ENCODE measurements at regions of chr14 and their contacts with region 1.

Region 1: DNA sequence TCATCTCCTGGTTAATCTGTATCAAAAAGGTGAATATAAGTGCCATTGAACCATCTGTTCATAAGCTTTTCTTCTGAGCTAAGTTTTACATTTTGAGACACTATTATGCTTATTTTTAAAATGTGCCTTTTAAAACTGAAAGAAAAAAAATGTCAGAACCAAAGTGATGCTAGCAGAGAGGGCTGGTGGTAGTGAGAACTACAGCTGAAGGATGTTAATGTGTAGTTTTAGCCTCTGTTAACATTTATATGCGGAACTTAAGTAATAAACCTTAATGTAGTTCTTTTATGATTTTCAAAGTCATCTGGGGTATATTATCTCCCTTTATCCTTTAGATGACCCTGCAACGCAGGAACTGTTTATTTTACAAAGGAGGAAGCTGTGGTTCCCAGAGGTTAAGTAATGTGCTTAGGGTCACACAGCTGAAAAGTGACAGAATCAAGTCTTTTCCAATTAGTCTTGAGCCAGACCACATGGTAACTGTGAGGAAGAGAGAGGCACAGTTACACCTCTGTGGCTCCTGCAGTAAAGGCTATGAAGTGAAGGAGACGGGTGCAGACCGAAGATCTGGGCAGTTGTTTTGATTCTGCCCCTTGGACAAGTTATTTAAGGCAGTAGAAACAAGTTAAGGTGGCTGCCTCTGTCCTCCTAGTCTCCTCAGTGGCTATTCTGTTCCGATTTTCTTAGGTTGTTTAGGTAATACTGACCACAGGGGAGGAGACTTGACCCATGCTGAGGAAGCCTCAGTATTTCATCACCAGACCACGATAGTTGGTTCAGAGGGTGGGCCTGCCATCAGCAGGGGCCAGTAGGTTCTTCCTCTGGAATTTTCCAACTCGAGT is 23.9 kb downstream of the GNG2 start:
- DNase-seq: no peak
- ATAC-seq: peak; percentile 84
- H3K4me3 ChIP-seq: peak overlapping the region; percentile 4; the same call in 1 of the 2 replicates
- H3K27ac ChIP-seq: peak overlapping the region; percentile 34
- H3K4me1 ChIP-seq: peaks cover 38% of the 10 kb centered on the region
- H3K27me3 ChIP-seq: no peaks in the 10 kb centered on the region
- CTCF ChIP-seq: no peak
- EP300 ChIP-seq: peak in 1 of 2 experiments; percentile 56; a peak in 1 of 4 replicates
- POLR2A ChIP-seq: no peak
- RAD21 ChIP-seq: no peak

Region 2: GRCh38 chr14:51490205-51490604 is 394.1 kb before region 1 on chr14:
- CTCF ChIA-PET with region 1: no interaction called
- POLR2A ChIA-PET with region 1: no interaction called
- RAD21 ChIA-PET with region 1: no interaction called
- SMC1A ChIA-PET with region 1: no interaction called
- in situ Hi-C with region 1: no loop called
- intact Hi-C with region 1: no loop called
- DNase-seq: no peak
- ATAC-seq: no peak
- H3K4me3 ChIP-seq: no peak overlapping the region
- H3K27ac ChIP-seq: no peak overlapping the region
- H3K4me1 ChIP-seq: no peaks in the 10 kb centered on the region
- H3K27me3 ChIP-seq: no peaks in the 10 kb centered on the region; a peak in 1 of 4 replicates
- CTCF ChIP-seq: no peak
- EP300 ChIP-seq: no peak
- POLR2A ChIP-seq: no peak
- RAD21 ChIP-seq: no peak

Region 3: GRCh38 chr14:51651388-51652167 is 232.7 kb before region 1 on chr14 and contains the start of gene FRMD6:
- CTCF ChIA-PET with region 1: no interaction called
- POLR2A ChIA-PET with region 1: no interaction called
- RAD21 ChIA-PET with region 1: no interaction called
- SMC1A ChIA-PET with region 1: no interaction called
- in situ Hi-C with region 1: no loop called
- intact Hi-C with region 1: no loop called
- DNase-seq: peak; percentile 26
- ATAC-seq: peak; percentile 90
- H3K4me3 ChIP-seq: peak within 1 kb of the TSS; percentile 84
- H3K27ac ChIP-seq: peak within 1 kb of the TSS; percentile 41
- H3K4me1 ChIP-seq: no peaks in the 10 kb centered on the region
- H3K27me3 ChIP-seq: peaks cover 3 to 9% of the 10 kb centered on the region in 2 experiments; a peak in 3 of 4 replicates
- CTCF ChIP-seq: peak; percentile 54 to 80 (median 68)
- EP300 ChIP-seq: no peak
- POLR2A ChIP-seq: peak; percentile 82; the same call in 1 of the 2 replicates
- RAD21 ChIP-seq: peak; percentile 59
- polyA plus RNA-seq, gene FRMD6: 1.1 to 1.6 TPM

Region 4: DNA sequence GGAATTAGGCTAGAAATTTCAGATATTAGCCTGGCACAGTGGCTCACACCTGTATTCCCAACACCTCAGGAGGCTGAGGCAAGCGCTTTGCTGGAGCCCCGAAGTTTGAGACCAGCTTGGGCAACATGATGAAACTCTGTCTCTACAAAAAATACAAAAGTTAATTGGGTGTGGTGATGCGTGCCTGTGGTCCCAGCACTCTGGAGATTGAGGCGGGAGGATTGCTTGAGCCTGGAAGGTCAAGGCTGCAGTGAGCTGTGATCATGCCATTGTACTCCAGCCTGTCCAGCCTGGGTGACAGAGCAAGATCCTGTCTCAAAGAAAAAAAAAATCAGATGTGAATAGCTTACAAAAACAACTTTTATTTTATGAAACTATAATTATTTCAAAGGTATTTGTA is 217.5 kb before region 1 on chr14:
- CTCF ChIA-PET with region 1: no interaction called
- POLR2A ChIA-PET with region 1: no interaction called
- RAD21 ChIA-PET with region 1: no interaction called
- SMC1A ChIA-PET with region 1: no interaction called
- in situ Hi-C with region 1: no loop called
- intact Hi-C with region 1: no loop called
- DNase-seq: no peak
- ATAC-seq: no peak
- H3K4me3 ChIP-seq: no peak overlapping the region
- H3K27ac ChIP-seq: no peak overlapping the region
- H3K4me1 ChIP-seq: no peaks in the 10 kb centered on the region
- H3K27me3 ChIP-seq: no peaks in the 10 kb centered on the region; a peak in 1 of 4 replicates
- CTCF ChIP-seq: no peak
- EP300 ChIP-seq: no peak
- POLR2A ChIP-seq: no peak
- RAD21 ChIP-seq: no peak

Region 5: GRCh38 chr14:51828017-51828797 is 56.1 kb before region 1 on chr14:
- CTCF ChIA-PET with region 1: interaction called, 5 read pairs
- POLR2A ChIA-PET with region 1: no interaction called
- RAD21 ChIA-PET with region 1: interaction called, 4 read pairs
- SMC1A ChIA-PET with region 1: interaction called, 11 read pairs
- in situ Hi-C with region 1: no loop called
- intact Hi-C with region 1: no loop called
- DNase-seq: peak; percentile 74
- ATAC-seq: peak; percentile 99
- H3K4me3 ChIP-seq: no peak overlapping the region
- H3K27ac ChIP-seq: no peak overlapping the region
- H3K4me1 ChIP-seq: no peaks in the 10 kb centered on the region
- H3K27me3 ChIP-seq: no peaks in the 10 kb centered on the region
- CTCF ChIP-seq: peak in 1 of 3 experiments; percentile 26; a peak in 2 of 6 replicates
- EP300 ChIP-seq: peak in 1 of 2 experiments; percentile 17; a peak in 1 of 4 replicates
- POLR2A ChIP-seq: no peak
- RAD21 ChIP-seq: 0 out of 2 replicates have a peak, but pooled peaks have one; percentile 3

Region 6: GRCh38 chr14:51860164-51860824 is 24.0 kb before region 1 on chr14 and contains the start of gene GNG2:
- CTCF ChIA-PET with region 1: interaction called, 9 read pairs
- POLR2A ChIA-PET with region 1: interaction called, 37 read pairs
- RAD21 ChIA-PET with region 1: interaction called, 197 read pairs
- SMC1A ChIA-PET with region 1: interaction called, 254 read pairs
- in situ Hi-C with region 1: no loop called
- intact Hi-C with region 1: no loop called
- DNase-seq: peak; percentile 71
- ATAC-seq: peak; percentile 88
- H3K4me3 ChIP-seq: peak within 1 kb of the TSS; percentile 90
- H3K27ac ChIP-seq: peak within 1 kb of the TSS; percentile 82
- H3K4me1 ChIP-seq: peaks cover 12% of the 10 kb centered on the region
- H3K27me3 ChIP-seq: no peaks in the 10 kb centered on the region
- CTCF ChIP-seq: no peak
- EP300 ChIP-seq: no peak
- POLR2A ChIP-seq: peak; percentile 94
- RAD21 ChIP-seq: no peak
- polyA plus RNA-seq, gene GNG2: 31.6 to 42.0 TPM

Region 7: DNA sequence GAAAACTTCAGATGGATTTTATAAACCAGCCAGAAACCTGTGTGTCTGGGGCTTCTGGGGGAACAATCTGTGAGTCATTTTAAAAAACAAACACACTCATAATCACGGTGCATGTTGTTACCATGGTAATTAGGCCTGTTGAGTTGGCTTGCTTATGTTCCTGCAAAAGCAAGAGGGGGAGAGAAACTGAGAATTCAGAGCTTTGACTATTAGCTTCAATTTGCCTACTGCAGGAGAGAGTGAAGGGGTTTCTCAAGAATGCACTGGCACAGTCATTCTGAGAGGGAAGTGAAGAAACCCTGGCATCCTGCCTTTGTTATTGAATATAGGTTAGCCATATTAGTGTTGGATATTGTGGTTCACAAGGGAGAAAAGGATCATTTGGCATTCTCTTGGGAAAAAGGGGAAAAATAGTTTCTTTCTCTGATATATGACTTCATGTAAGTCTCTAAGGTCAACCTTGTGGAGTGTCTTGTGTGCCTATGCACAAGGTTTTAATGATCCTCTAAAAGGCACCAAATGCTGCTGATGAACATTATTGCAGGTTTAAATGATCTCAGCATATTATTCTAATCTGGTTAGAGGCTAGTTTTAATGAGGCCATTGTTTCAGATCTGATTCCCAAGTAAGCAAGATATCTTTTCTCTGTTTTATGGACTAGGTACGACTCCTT is 10.9 kb before region 1 on chr14:
- CTCF ChIA-PET with region 1: interaction called, 11 read pairs
- POLR2A ChIA-PET with region 1: interaction called, 28 read pairs
- RAD21 ChIA-PET with region 1: interaction called, 197 read pairs
- SMC1A ChIA-PET with region 1: interaction called, 254 read pairs
- in situ Hi-C with region 1: no loop called
- intact Hi-C with region 1: no loop called
- DNase-seq: peak; percentile 94
- ATAC-seq: peak; percentile 85
- H3K4me3 ChIP-seq: no peak overlapping the region
- H3K27ac ChIP-seq: peak overlapping the region; percentile 50
- H3K4me1 ChIP-seq: peaks cover 42% of the 10 kb centered on the region
- H3K27me3 ChIP-seq: no peaks in the 10 kb centered on the region
- CTCF ChIP-seq: no peak
- EP300 ChIP-seq: peak; percentile 78 to 81; a peak in 3 of 4 replicates
- POLR2A ChIP-seq: no peak
- RAD21 ChIP-seq: peak; percentile 2; the same call in 1 of the 2 replicates

Region 8: GRCh38 chr14:51901475-51902024 is 17.2 kb after region 1 on chr14:
- CTCF ChIA-PET with region 1: interaction called, 7 read pairs
- POLR2A ChIA-PET with region 1: interaction called, 5 read pairs
- RAD21 ChIA-PET with region 1: interaction called, 4 read pairs
- SMC1A ChIA-PET with region 1: interaction called, 12 read pairs
- in situ Hi-C with region 1: no loop called
- intact Hi-C with region 1: no loop called
- DNase-seq: no peak
- ATAC-seq: no peak
- H3K4me3 ChIP-seq: no peak overlapping the region
- H3K27ac ChIP-seq: no peak overlapping the region
- H3K4me1 ChIP-seq: no peaks in the 10 kb centered on the region
- H3K27me3 ChIP-seq: no peaks in the 10 kb centered on the region
- CTCF ChIP-seq: no peak
- EP300 ChIP-seq: no peak
- POLR2A ChIP-seq: no peak
- RAD21 ChIP-seq: no peak